Ascending aorta (tissue), 2 donors: ENCODE measurements at regions of chr7 and their contacts with region 1.

Region 1: GRCh38 chr7:30412810-30413504 is 65.6 kb downstream of the NOD1 start:
- DNase-seq: no peak
- H3K4me3 ChIP-seq: no peak overlapping the region
- H3K27ac ChIP-seq: no peak overlapping the region
- H3K4me1 ChIP-seq: no peaks in the 10 kb centered on the region
- H3K27me3 ChIP-seq: no peaks in the 10 kb centered on the region
- CTCF ChIP-seq: peak; percentile 44 to 73 (median 63)

Region 2: DNA sequence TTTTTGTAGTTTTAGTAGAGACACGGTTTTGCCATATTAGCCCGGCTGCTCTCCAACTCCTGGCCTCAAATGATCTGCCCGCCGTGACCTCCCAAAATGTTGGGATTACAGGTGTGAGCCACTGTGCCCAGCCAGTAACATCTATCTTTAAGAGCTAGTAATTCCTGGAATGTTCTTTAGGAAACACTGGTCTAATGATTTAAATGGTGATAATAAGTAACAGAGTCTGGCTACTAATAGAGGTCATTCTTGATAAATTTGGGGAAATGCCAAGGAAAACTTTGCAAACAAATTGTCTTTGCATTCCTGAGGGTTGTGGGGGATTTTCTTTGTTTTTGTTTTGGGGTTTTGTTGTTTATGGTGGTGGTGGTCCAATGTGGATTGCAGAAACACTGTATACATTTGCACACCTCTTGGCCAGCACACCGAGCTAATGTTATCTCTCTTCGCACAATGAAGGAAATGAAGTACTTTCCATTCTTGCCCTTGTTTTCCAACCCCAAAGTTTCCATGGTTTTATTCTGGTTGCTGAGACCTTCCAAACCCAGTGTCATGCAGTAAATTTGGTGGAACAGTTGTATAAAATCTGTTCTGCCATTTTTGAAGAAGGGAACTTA is 658.0 kb before region 1 on chr7:
- intact Hi-C with region 1: no loop called
- DNase-seq: no peak
- H3K4me3 ChIP-seq: no peak overlapping the region
- H3K27ac ChIP-seq: no peak overlapping the region
- H3K4me1 ChIP-seq: no peaks in the 10 kb centered on the region
- H3K27me3 ChIP-seq: no peaks in the 10 kb centered on the region
- CTCF ChIP-seq: no peak

Region 3: GRCh38 chr7:29946428-29947186 is 466.4 kb before region 1 on chr7:
- intact Hi-C with region 1: loop called (anchors 5 kb)
- DNase-seq: no peak
- H3K4me3 ChIP-seq: no peak overlapping the region
- H3K27ac ChIP-seq: no peak overlapping the region
- H3K4me1 ChIP-seq: no peaks in the 10 kb centered on the region
- H3K27me3 ChIP-seq: no peaks in the 10 kb centered on the region
- CTCF ChIP-seq: peak in 2 of 3 experiments; percentile 16 to 53

Region 4: GRCh38 chr7:30164567-30164966 is 248.4 kb before region 1 on chr7:
- intact Hi-C with region 1: loop called (anchors 2 kb)
- DNase-seq: no peak
- H3K4me3 ChIP-seq: no peak overlapping the region
- H3K27ac ChIP-seq: peak overlapping the region in 1 of 2 donors; percentile 47
- H3K4me1 ChIP-seq: peaks cover 0 to 5% of the 10 kb centered on the region in 2 donors
- H3K27me3 ChIP-seq: no peaks in the 10 kb centered on the region
- CTCF ChIP-seq: peak; percentile 49 to 61 (median 52)

Region 5: GRCh38 chr7:30276203-30276900 is 136.6 kb before region 1 on chr7:
- intact Hi-C with region 1: loop called (anchors 1 kb)
- DNase-seq: no peak
- H3K4me3 ChIP-seq: no peak overlapping the region
- H3K27ac ChIP-seq: no peak overlapping the region
- H3K4me1 ChIP-seq: no peaks in the 10 kb centered on the region
- H3K27me3 ChIP-seq: no peaks in the 10 kb centered on the region
- CTCF ChIP-seq: peak; percentile 11 to 49 (median 29)

Region 6: DNA sequence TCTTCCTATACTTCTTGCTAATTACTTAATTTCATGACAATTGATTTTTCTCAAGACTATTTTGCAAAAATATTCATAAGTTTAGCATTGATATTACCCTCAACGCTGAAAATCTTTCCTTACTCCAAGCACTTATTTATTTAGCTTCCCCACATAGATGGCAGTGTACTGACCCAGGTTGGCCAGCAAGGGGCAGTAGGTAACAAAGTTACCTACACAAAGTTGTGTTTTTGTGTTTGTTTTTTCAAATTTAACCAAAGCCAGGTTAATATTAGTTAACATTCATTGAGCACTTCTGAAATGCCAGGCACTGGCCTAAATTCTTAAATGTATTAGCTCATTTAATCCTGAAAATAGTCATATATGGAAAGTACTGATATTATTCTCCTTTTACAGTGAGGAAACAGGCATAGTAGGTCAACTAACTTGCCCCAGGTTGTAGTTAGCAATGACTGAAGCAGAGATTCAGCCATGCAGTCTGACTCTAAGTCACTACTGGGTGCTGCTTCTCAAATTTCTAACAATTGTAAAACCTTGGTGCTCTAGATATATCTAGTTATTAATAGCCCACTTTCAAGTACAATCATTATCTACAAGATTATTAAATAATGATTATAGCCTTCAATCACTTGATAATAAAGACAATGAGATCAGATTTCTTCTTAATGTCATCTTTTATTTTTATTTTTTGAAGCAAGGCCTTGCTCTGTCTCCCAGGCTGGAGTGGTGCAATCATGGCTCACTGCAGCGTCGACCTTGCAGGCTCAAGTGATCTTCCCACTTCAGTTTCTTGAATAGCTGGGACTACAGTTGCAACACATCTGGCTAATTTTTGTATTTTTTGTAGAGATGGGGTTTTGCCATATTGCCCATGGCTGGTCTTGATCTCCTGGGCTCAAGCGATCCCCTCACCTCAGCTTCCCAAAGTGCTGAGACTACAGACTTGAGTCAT is 97.4 kb after region 1 on chr7:
- intact Hi-C with region 1: no loop called
- DNase-seq: no peak
- H3K4me3 ChIP-seq: no peak overlapping the region
- H3K27ac ChIP-seq: no peak overlapping the region
- H3K4me1 ChIP-seq: no peaks in the 10 kb centered on the region
- H3K27me3 ChIP-seq: no peaks in the 10 kb centered on the region
- CTCF ChIP-seq: peak; percentile 32 to 74 (median 69)